Activated T-helper 1 cell treated with anti-CD3 and anti-CD28 coated beads, Interleukin-12 subunit alpha, Interleukin-12 subunit beta, Interleukin-2, Interleukin-4 antibody, amounts not matched to agents 30 ng/mL and 10 ng/mL and 1 ng/mL, durations not matched to agents 14 hours and 24 hours and 36 hours (primary cell): ENCODE measurements at regions of chr18 and their contacts with region 1.

Region 1: GRCh38 chr18:22734776-22735627 is 198.1 kb upstream of the RBBP8 start:
- DNase-seq: no peak
- H3K4me3 Mint-ChIP-seq: no peak overlapping the region
- H3K27ac Mint-ChIP-seq: no peak overlapping the region
- H3K4me1 Mint-ChIP-seq: peaks cover 11% of the 10 kb centered on the region
- H3K27me3 Mint-ChIP-seq: no peaks in the 10 kb centered on the region

Region 2: GRCh38 chr18:22505141-22505591 is 229.8 kb before region 1 on chr18:
- intact Hi-C with region 1: no loop called
- DNase-seq: no peak
- H3K4me3 Mint-ChIP-seq: no peak overlapping the region
- H3K27ac Mint-ChIP-seq: no peak overlapping the region
- H3K4me1 Mint-ChIP-seq: no peaks in the 10 kb centered on the region
- H3K27me3 Mint-ChIP-seq: no peaks in the 10 kb centered on the region

Region 3: GRCh38 chr18:22639026-22639463 is 96.0 kb before region 1 on chr18:
- intact Hi-C with region 1: no loop called
- DNase-seq: no peak
- H3K4me3 Mint-ChIP-seq: no peak overlapping the region
- H3K27ac Mint-ChIP-seq: no peak overlapping the region
- H3K4me1 Mint-ChIP-seq: no peaks in the 10 kb centered on the region
- H3K27me3 Mint-ChIP-seq: no peaks in the 10 kb centered on the region

Region 4: GRCh38 chr18:22674272-22674671 is 60.7 kb before region 1 on chr18:
- intact Hi-C with region 1: loop called (anchors 10 kb)
- DNase-seq: no peak
- H3K4me3 Mint-ChIP-seq: no peak overlapping the region
- H3K27ac Mint-ChIP-seq: no peak overlapping the region
- H3K4me1 Mint-ChIP-seq: no peaks in the 10 kb centered on the region
- H3K27me3 Mint-ChIP-seq: peaks cover 2% of the 10 kb centered on the region

Region 5: DNA sequence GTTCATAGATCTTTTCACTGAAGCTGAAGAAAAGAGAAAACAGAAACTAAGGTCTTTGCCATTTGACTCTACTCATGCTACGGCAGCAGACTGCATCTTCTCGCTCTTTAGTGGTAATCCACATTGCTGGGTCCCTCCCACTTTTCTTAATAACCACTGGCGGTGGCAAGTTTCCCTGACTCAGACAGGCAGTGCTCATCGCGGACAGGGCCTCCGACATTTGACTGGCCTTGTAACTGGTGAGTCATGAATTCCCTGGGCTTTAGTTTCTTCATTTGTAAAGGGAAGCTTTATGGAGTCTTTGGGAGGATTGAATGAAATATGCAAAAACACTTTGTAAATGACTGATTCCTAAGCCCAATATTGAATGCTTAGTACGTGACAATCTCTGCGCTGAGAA is 40.0 kb before region 1 on chr18:
- intact Hi-C with region 1: no loop called
- DNase-seq: no peak
- H3K4me3 Mint-ChIP-seq: no peak overlapping the region
- H3K27ac Mint-ChIP-seq: no peak overlapping the region
- H3K4me1 Mint-ChIP-seq: no peaks in the 10 kb centered on the region
- H3K27me3 Mint-ChIP-seq: peaks cover 2% of the 10 kb centered on the region